ENCODE measurements at regions of chr12 and their contacts with region 1.

Region 1: GRCh38 chr12:95124106-95124505 is 50.7 kb upstream of the NR2C1 start:
- DNase-seq: no peak
- ATAC-seq: no peak
- H3K4me3 ChIP-seq: no peak overlapping the region
- H3K27ac ChIP-seq: no peak overlapping the region
- H3K4me1 ChIP-seq: no peaks in the 10 kb centered on the region
- H3K27me3 ChIP-seq: no peaks in the 10 kb centered on the region
- CTCF ChIP-seq: no peak

Region 2: GRCh38 chr12:95014554-95014953 is 109.6 kb before region 1 on chr12:
- intact Hi-C with region 1: no loop called
- DNase-seq: no peak
- ATAC-seq: no peak
- H3K4me3 ChIP-seq: no peak overlapping the region
- H3K27ac ChIP-seq: no peak overlapping the region
- H3K4me1 ChIP-seq: no peaks in the 10 kb centered on the region
- H3K27me3 ChIP-seq: no peaks in the 10 kb centered on the region
- CTCF ChIP-seq: no peak

Region 3: DNA sequence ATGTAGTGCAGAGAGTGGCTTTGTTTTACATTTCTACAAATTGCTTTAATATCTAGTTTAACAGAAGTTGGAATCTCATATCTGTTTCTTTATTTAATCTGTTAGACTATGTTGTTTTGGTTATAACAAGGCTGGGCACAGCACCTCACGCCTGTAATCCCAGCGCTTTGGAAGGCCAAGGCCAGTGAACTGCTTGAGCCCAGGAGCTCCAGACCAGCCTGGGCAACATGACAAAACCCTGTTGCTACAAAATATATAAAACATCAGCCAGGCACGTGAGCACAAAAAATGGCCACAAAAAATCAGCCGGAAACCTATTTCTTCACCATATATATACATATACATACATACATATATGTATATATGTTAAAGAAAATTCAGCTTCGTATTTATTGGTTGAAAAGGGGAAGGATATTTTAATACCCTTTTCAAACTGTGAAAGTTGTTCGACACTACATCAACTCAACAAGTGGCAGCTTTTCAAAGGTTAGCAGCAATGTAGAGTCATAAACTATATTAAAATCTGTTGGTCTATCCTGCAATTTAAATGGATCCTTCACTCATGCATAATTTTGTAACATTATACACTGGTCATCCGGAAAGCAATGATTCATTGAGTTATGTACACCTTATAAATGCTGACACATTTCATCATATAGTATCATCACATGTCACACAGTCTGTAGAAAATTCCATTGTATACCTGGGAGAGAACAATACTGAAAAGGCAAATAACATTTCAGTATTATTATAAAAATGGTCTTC is 57.8 kb before region 1 on chr12:
- intact Hi-C with region 1: no loop called
- DNase-seq: no peak
- ATAC-seq: no peak
- H3K4me3 ChIP-seq: no peak overlapping the region
- H3K27ac ChIP-seq: no peak overlapping the region
- H3K4me1 ChIP-seq: no peaks in the 10 kb centered on the region
- H3K27me3 ChIP-seq: no peaks in the 10 kb centered on the region
- CTCF ChIP-seq: no peak

Region 4: DNA sequence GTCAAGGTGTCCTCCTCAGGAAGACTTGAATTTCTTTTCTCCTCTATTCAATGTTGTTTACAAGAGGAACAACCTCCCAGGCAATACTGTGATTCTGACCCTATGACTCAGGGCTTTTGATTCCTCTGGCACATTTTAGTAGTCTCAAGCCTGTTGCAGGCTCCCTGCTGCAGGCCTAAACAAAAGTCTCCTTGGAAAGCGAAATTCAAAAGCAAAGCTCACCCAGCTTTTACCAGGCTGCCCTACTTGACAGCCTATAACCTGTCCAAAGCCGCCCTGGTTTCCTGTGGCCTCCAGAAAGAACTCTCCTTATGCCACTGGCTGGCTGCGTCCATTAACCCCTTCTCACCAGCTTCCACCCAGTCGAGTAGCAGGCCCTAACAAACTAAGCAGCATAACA is 81.6 kb after region 1 on chr12:
- intact Hi-C with region 1: loop called in 1 of 3 experiments (anchors 5 kb)
- DNase-seq: no peak
- ATAC-seq: peak in 3 of 4 donors; percentile 51 to 74 (median 71)
- H3K4me3 ChIP-seq: no peak overlapping the region
- H3K27ac ChIP-seq: peak overlapping the region in 2 of 4 donors; percentile 26 to 32
- H3K4me1 ChIP-seq: peaks cover 0 to 47% (median 13%) of the 10 kb centered on the region in 3 donors
- H3K27me3 ChIP-seq: no peaks in the 10 kb centered on the region
- CTCF ChIP-seq: no peak